GM12878 (cell line): ENCODE measurements at regions of chr5 and their contacts with region 1.

Region 1: GRCh38 chr5:124935065-124935464 is 188.6 kb upstream of the ZNF608 start:
- DNase-seq: peak; percentile 87
- ATAC-seq: peak; percentile 80
- H3K4me3 ChIP-seq: no peak overlapping the region
- H3K27ac ChIP-seq: peak overlapping the region; percentile 89
- H3K4me1 ChIP-seq: peaks cover 21% of the 10 kb centered on the region
- H3K27me3 ChIP-seq: no peaks in the 10 kb centered on the region
- CTCF ChIP-seq: no peak
- EP300 ChIP-seq: peak; percentile 91 to 95
- POLR2A ChIP-seq: peak; percentile 30; the same call in 1 of the 2 replicates
- RAD21 ChIP-seq: peak; percentile 29; the same call in 1 of the 2 replicates

Region 2: GRCh38 chr5:124453221-124454051 is 481.6 kb before region 1 on chr5:
- CTCF ChIA-PET with region 1: no interaction called
- POLR2A ChIA-PET with region 1: no interaction called
- RAD21 ChIA-PET with region 1: no interaction called
- SMC1A ChIA-PET with region 1: no interaction called
- in situ Hi-C with region 1: no loop called
- intact Hi-C with region 1: loop called (anchors 2 kb)
- DNase-seq: peak; percentile 83
- ATAC-seq: peak; percentile 98
- H3K4me3 ChIP-seq: no peak overlapping the region
- H3K27ac ChIP-seq: peak overlapping the region; percentile 40; the same call in 1 of the 2 replicates
- H3K4me1 ChIP-seq: peaks cover 19% of the 10 kb centered on the region
- H3K27me3 ChIP-seq: no peaks in the 10 kb centered on the region
- CTCF ChIP-seq: no peak
- EP300 ChIP-seq: no peak
- POLR2A ChIP-seq: no peak
- RAD21 ChIP-seq: no peak

Region 3: DNA sequence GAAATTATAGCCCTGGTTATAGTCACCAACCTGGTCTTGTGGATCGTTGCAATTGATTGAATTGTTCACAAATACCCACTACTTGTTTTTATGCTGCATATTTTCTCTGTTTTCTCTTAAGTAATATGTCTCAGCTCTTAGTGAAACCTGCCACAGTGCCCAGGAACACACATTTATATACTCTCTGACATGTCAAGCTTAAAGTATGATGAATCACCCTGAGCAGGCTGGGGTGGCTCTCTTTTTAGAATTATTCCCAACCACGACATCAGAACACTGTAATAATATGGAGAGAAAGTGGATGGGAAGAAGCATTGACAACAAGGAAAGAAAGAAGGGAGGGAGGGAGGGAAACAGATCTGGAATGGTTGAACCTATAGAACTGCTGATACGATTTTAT is 115.9 kb before region 1 on chr5:
- CTCF ChIA-PET with region 1: no interaction called
- POLR2A ChIA-PET with region 1: no interaction called
- RAD21 ChIA-PET with region 1: no interaction called
- SMC1A ChIA-PET with region 1: no interaction called
- in situ Hi-C with region 1: no loop called
- intact Hi-C with region 1: no loop called
- DNase-seq: no peak
- ATAC-seq: no peak
- H3K4me3 ChIP-seq: no peak overlapping the region
- H3K27ac ChIP-seq: no peak overlapping the region
- H3K4me1 ChIP-seq: no peaks in the 10 kb centered on the region
- H3K27me3 ChIP-seq: no peaks in the 10 kb centered on the region
- CTCF ChIP-seq: no peak
- EP300 ChIP-seq: no peak
- POLR2A ChIP-seq: no peak
- RAD21 ChIP-seq: no peak

Region 4: GRCh38 chr5:124902097-124902821 is 32.8 kb before region 1 on chr5:
- CTCF ChIA-PET with region 1: no interaction called
- POLR2A ChIA-PET with region 1: interaction called, 4 read pairs
- RAD21 ChIA-PET with region 1: interaction called, 40 read pairs
- SMC1A ChIA-PET with region 1: interaction called, 45 read pairs
- in situ Hi-C with region 1: no loop called
- intact Hi-C with region 1: no loop called
- DNase-seq: peak; percentile 92
- ATAC-seq: peak; percentile 99
- H3K4me3 ChIP-seq: 0 out of 2 replicates have a peak overlapping the region, but pooled peaks have one; percentile 15
- H3K27ac ChIP-seq: peak overlapping the region; percentile 59
- H3K4me1 ChIP-seq: peaks cover 17% of the 10 kb centered on the region
- H3K27me3 ChIP-seq: no peaks in the 10 kb centered on the region
- CTCF ChIP-seq: no peak
- EP300 ChIP-seq: peak; percentile 77 to 90; a peak in 3 of 4 replicates
- POLR2A ChIP-seq: 0 out of 2 replicates have a peak, but pooled peaks have one; percentile 33
- RAD21 ChIP-seq: peak; percentile 33; the same call in 1 of the 2 replicates

Region 5: GRCh38 chr5:124920909-124921666 is 14.0 kb before region 1 on chr5:
- CTCF ChIA-PET with region 1: interaction called, 13 read pairs
- POLR2A ChIA-PET with region 1: interaction called, 12 read pairs
- RAD21 ChIA-PET with region 1: interaction called, 86 read pairs
- SMC1A ChIA-PET with region 1: interaction called, 36 read pairs
- in situ Hi-C with region 1: no loop called
- intact Hi-C with region 1: loop called (anchors 1 kb)
- DNase-seq: no peak
- ATAC-seq: peak; percentile 92
- H3K4me3 ChIP-seq: peak overlapping the region; percentile 44; the same call in 1 of the 2 replicates
- H3K27ac ChIP-seq: peak overlapping the region; percentile 86
- H3K4me1 ChIP-seq: peaks cover 30% of the 10 kb centered on the region
- H3K27me3 ChIP-seq: no peaks in the 10 kb centered on the region
- CTCF ChIP-seq: peak in 1 of 3 experiments; percentile 14; a peak in 1 of 6 replicates
- EP300 ChIP-seq: peak; percentile 83 to 85
- POLR2A ChIP-seq: no peak
- RAD21 ChIP-seq: peak; percentile 27

Region 6: GRCh38 chr5:125006011-125006685 is 71.1 kb after region 1 on chr5:
- CTCF ChIA-PET with region 1: interaction called, 6 read pairs
- POLR2A ChIA-PET with region 1: interaction called, 4 read pairs
- RAD21 ChIA-PET with region 1: interaction called, 30 read pairs
- SMC1A ChIA-PET with region 1: interaction called, 15 read pairs
- in situ Hi-C with region 1: no loop called
- intact Hi-C with region 1: loop called (anchors 1 kb)
- DNase-seq: peak; percentile 71
- ATAC-seq: peak; percentile 82
- H3K4me3 ChIP-seq: 0 out of 2 replicates have a peak overlapping the region, but pooled peaks have one; percentile 0
- H3K27ac ChIP-seq: peak overlapping the region; percentile 69
- H3K4me1 ChIP-seq: peaks cover 18% of the 10 kb centered on the region
- H3K27me3 ChIP-seq: no peaks in the 10 kb centered on the region
- CTCF ChIP-seq: no peak
- EP300 ChIP-seq: peak; percentile 92 to 95
- POLR2A ChIP-seq: no peak
- RAD21 ChIP-seq: peak; percentile 36

Region 7: GRCh38 chr5:126753227-126753626 is 1818.2 kb after region 1 on chr5:
- CTCF ChIA-PET with region 1: no interaction called
- POLR2A ChIA-PET with region 1: no interaction called
- RAD21 ChIA-PET with region 1: no interaction called
- SMC1A ChIA-PET with region 1: no interaction called
- in situ Hi-C with region 1: loop called (anchors 25 kb)
- intact Hi-C with region 1: no loop called
- DNase-seq: no peak
- ATAC-seq: no peak
- H3K4me3 ChIP-seq: no peak overlapping the region
- H3K27ac ChIP-seq: no peak overlapping the region
- H3K4me1 ChIP-seq: peaks cover 14% of the 10 kb centered on the region
- H3K27me3 ChIP-seq: no peaks in the 10 kb centered on the region
- CTCF ChIP-seq: no peak
- EP300 ChIP-seq: no peak
- POLR2A ChIP-seq: no peak
- RAD21 ChIP-seq: no peak